ENCODE measurements at regions of chr4 and their contacts with region 1.

Region 1: DNA sequence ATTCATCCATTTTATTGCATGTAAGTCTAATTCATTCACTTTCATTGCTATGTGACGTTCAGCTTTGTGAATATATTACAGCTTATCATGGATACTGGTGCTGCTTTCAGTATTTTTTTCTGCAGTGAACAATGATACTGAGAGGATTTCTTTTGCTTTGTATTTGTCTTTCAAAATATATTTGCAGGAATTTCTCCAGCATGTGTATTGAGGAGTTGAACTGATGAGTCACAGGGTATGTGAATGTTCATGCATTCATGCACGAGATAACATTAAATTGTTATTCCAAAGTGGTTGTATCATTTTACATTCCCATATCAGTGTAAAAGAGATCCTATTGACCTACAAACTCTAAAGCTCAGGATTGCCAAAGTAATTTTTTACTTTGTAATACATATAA is 283.8 kb upstream of the ARSJ start:
- DNase-seq: no peak
- H3K4me3 Mint-ChIP-seq: no peak overlapping the region
- H3K27ac Mint-ChIP-seq: no peak overlapping the region
- H3K4me1 Mint-ChIP-seq: peaks cover 26% of the 10 kb centered on the region
- H3K27me3 Mint-ChIP-seq: no peaks in the 10 kb centered on the region
- CTCF ChIP-seq: no peak

Region 2: GRCh38 chr4:114364857-114365256 is 101.6 kb after region 1 on chr4:
- CTCF ChIA-PET with region 1: no interaction called
- intact Hi-C with region 1: loop called (anchors 10 kb)
- DNase-seq: no peak
- H3K4me3 Mint-ChIP-seq: no peak overlapping the region
- H3K27ac Mint-ChIP-seq: no peak overlapping the region
- H3K4me1 Mint-ChIP-seq: no peaks in the 10 kb centered on the region
- H3K27me3 Mint-ChIP-seq: no peaks in the 10 kb centered on the region
- CTCF ChIP-seq: no peak